Posterior vena cava (tissue), 2 donors: ENCODE measurements at regions of chr5 and their contacts with region 1.

Region 1: DNA sequence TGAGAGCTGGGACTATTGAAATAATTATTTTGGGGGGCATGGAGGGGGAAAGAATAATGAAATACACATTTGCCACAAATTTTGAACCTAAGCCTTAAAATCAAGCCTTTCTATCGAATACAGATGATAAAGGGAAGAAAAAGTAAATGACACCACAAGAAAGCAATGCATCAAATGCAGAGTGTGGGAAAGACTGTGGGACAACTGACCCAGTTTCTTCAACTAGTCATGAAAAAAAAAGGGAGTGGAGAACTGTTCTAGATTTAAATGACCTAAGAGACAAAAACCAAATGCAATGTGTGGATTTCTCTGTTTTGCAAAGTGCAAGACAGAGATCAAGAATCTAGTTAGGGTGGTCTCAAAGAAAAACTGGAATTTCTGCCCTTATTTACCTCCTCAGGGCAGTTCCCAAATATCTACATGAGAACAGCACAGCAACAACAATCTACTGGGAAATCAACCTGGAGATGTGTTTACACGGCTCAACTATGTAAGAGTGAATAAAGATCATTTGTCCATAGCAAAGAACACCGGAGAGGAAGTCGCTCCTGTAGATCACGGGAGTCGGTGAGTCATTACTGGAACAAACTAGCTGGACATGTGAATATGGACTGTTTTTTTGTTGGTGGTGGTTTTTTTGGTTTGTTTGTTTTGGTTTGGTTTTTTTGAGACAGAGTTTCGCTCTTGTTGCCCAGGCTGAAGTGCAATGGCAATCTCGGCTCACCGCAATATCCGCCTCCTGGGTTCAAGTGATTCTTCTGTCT is 145.9 kb downstream of the DROSHA start:
- DNase-seq: no peak

Region 2: DNA sequence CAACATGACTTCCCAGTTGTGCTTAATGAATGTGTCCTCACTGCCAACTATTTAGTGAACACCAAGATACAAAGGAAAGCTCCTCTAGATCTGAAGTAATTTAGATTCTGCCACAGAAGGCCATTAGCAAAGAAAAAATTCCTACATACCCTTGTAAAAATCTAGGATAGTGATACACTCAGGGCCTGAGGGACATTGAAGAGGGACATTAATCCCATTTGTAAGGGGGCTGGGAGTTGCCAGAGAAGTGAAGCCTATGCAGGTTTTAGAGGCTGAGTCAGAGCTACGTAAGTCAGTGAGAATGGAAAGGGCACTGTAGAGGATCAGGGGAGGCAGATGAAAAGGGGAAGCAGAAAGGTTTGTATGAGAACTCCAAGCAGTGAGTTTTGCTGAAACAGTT is 1767.9 kb after region 1 on chr5:
- intact Hi-C with region 1: loop called in 1 of 2 experiments (anchors 5 kb)
- DNase-seq: no peak